Mammary epithelial cell (primary cell): ENCODE measurements at regions of chr4 and their contacts with region 1.

Region 1: GRCh38 chr4:180664766-180665368 is 1578.3 kb upstream of the TENM3 start:
- DNase-seq: peak; percentile 63
- H3K4me3 ChIP-seq: no peak overlapping the region
- H3K27ac ChIP-seq: no peak overlapping the region
- H3K4me1 ChIP-seq: no peaks in the 10 kb centered on the region
- H3K27me3 ChIP-seq: no peaks in the 10 kb centered on the region
- CTCF ChIP-seq: peak; percentile 77 to 82

Region 2: DNA sequence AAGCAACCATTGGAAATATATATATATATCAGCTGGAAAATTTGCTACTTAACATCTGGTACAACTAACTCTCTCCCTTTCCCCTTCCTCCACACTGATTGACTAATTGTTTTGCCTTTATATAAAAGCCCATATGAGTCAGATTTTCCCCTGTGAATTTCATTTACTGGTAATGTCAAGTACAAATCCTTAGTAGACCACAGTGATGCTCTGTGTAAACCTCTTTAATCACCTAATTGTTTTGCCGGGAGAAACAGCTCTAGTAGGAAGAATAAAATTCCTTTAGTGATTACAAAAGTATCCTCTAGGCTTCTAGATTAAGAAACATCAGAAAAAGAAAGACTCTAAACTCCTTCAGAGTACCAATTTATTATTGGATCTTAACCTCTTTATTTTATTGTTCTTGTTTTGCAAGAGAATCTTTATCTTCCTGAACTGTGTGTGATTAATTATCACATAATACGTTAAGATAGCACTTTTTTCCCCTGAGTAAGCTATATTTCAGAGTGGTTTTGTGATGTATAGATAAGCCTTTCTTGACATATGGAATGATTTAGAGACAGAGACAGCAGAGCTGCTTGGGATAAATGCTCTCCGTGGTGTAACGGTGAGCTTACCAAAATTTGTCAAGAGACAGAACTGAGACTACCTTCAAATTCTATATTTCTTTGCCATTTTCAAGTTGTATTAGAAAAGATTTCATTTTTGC is 28.0 kb before region 1 on chr4:
- CTCF ChIA-PET with region 1: no interaction called
- dilution Hi-C with region 1: no loop called
- in situ Hi-C with region 1: no loop called
- intact Hi-C with region 1: no loop called
- DNase-seq: peak; percentile 39
- H3K4me3 ChIP-seq: no peak overlapping the region
- H3K27ac ChIP-seq: no peak overlapping the region
- H3K4me1 ChIP-seq: no peaks in the 10 kb centered on the region
- H3K27me3 ChIP-seq: peaks cover 3% of the 10 kb centered on the region
- CTCF ChIP-seq: no peak

Region 3: GRCh38 chr4:180828440-180829018 is 163.7 kb after region 1 on chr4:
- CTCF ChIA-PET with region 1: interaction called, 3 read pairs
- dilution Hi-C with region 1: no loop called
- in situ Hi-C with region 1: no loop called
- intact Hi-C with region 1: loop called (anchors 1 kb)
- DNase-seq: peak; percentile 52
- H3K4me3 ChIP-seq: peak overlapping the region in 1 of 3 experiments; percentile 18
- H3K27ac ChIP-seq: peak overlapping the region; percentile 68
- H3K4me1 ChIP-seq: peaks cover 16% of the 10 kb centered on the region
- H3K27me3 ChIP-seq: no peaks in the 10 kb centered on the region
- CTCF ChIP-seq: peak; percentile 76 to 79

Region 4: GRCh38 chr4:180909279-180909678 is 244.4 kb after region 1 on chr4:
- CTCF ChIA-PET with region 1: no interaction called
- dilution Hi-C with region 1: no loop called
- in situ Hi-C with region 1: no loop called
- intact Hi-C with region 1: loop called (anchors 2 kb)
- DNase-seq: peak; percentile 40
- H3K4me3 ChIP-seq: no peak overlapping the region
- H3K27ac ChIP-seq: no peak overlapping the region
- H3K4me1 ChIP-seq: peaks cover 9% of the 10 kb centered on the region
- H3K27me3 ChIP-seq: no peaks in the 10 kb centered on the region
- CTCF ChIP-seq: peak; percentile 82 to 87

Region 5: DNA sequence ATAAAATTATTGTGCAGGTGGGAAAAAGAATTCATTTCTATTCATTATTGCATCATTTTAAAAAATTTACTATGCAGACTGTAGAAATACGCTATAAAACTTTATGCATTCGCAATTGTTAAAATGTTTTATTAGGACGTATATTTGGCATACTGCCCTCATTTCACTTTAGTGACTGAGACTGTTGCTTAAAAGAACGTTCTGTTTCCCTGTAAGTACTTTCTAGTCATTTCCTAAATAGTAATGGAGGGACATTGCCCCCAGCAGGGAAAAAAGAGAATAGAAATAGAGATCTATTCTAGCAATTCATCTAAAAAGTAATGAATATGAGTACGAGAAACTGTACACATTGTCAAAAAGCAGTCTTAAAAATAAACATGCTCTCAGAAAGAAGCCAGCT is 282.6 kb after region 1 on chr4:
- CTCF ChIA-PET with region 1: no interaction called
- dilution Hi-C with region 1: no loop called
- in situ Hi-C with region 1: loop called in 1 of 2 experiments (anchors 25 kb)
- intact Hi-C with region 1: loop called (anchors 2 kb)
- DNase-seq: peak; percentile 39
- H3K4me3 ChIP-seq: no peak overlapping the region
- H3K27ac ChIP-seq: no peak overlapping the region
- H3K4me1 ChIP-seq: peaks cover 22% of the 10 kb centered on the region
- H3K27me3 ChIP-seq: no peaks in the 10 kb centered on the region
- CTCF ChIP-seq: peak; percentile 42 to 57

Region 6: GRCh38 chr4:180960743-180961401 is 296.0 kb after region 1 on chr4:
- CTCF ChIA-PET with region 1: no interaction called
- dilution Hi-C with region 1: no loop called
- in situ Hi-C with region 1: loop called in 1 of 2 experiments (anchors 25 kb)
- intact Hi-C with region 1: no loop called
- DNase-seq: no peak
- H3K4me3 ChIP-seq: no peak overlapping the region
- H3K27ac ChIP-seq: no peak overlapping the region
- H3K4me1 ChIP-seq: no peaks in the 10 kb centered on the region
- H3K27me3 ChIP-seq: no peaks in the 10 kb centered on the region
- CTCF ChIP-seq: peak in 1 of 2 donors; percentile 45

Region 7: DNA sequence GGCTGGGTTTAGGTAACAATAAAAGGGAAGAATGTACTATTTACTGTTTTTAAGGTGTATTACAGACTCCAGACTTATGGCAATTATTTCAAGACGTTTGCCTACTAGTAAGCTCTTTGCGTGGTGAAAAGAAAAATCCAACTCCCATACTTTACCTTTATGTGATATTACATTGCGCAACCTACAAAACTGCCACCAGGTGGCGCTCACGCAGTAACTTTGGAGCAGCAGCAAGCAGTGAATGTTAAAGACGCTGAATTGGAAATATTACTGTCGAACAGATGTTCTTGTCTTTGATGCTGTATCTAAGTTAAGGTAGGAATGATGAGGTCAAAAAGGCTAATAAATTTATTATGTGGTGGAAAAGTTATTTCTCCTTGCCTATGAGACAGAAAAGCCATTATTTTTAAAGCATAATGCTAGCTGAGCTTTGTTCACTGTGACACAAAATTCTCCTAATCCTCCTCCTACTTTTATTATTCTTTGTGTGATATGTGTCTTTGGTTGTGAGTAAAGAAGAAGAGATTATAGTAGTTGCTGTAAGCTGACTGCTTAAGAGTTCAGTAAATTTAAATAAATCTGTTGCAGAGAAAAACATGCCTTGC is 478.5 kb after region 1 on chr4:
- CTCF ChIA-PET with region 1: no interaction called
- dilution Hi-C with region 1: no loop called
- in situ Hi-C with region 1: no loop called
- intact Hi-C with region 1: loop called (anchors 2 kb)
- DNase-seq: peak; percentile 50
- H3K4me3 ChIP-seq: no peak overlapping the region
- H3K27ac ChIP-seq: no peak overlapping the region
- H3K4me1 ChIP-seq: no peaks in the 10 kb centered on the region
- H3K27me3 ChIP-seq: no peaks in the 10 kb centered on the region
- CTCF ChIP-seq: peak; percentile 75 to 81

Region 8: GRCh38 chr4:181528570-181529184 is 863.8 kb after region 1 on chr4:
- CTCF ChIA-PET with region 1: no interaction called
- dilution Hi-C with region 1: no loop called
- in situ Hi-C with region 1: loop called in 1 of 2 experiments (anchors 25 kb)
- intact Hi-C with region 1: loop called (anchors 1 kb)
- DNase-seq: peak; percentile 43
- H3K4me3 ChIP-seq: no peak overlapping the region
- H3K27ac ChIP-seq: no peak overlapping the region
- H3K4me1 ChIP-seq: no peaks in the 10 kb centered on the region
- H3K27me3 ChIP-seq: peaks cover 3% of the 10 kb centered on the region
- CTCF ChIP-seq: peak; percentile 95 to 99